Endothelial cell of umbilical vein (primary cell): ENCODE measurements at regions of chr14 and their contacts with region 1.

Region 1: DNA sequence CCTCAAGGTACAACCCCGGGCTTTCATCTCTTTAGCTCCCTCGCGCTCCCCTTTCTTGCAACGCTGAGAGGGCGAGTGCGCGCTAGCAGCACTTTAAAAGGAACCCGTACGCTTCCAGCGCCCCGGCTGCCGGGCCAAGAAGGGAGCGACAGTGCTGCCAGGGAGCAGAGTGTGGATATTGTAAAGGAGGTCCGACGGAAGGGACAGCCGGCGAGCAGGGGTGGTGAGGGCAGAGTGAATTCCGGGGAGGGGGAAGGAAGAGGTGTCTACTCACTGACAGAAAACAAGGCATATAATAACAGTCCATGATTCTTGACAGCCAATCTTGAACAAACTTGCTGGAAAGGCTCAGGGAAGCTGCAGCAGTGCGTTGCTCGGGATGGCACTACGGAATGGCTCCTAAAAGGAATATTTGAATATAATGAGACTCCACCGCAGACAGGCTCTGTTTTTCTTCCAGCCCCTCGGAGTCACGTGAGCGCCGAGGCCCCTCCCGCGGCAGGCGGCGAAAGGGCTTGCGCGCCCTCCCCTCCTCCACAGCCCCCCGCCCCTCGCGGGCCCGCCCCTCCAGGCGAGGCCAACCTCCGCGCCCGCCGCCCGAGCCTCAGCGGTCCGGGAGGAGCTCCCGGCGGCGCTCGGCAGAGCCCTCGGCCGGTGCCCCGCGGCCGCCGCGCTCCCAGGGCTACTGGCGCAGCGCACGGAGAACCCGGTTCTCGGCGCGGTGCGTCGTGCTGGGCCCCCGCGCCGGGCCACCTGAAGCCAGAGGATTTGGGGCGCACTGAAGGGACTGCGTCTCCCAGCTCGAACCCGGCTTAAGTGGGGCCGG is 3.4 kb downstream of the BMP4 start:
- DNase-seq: peak; percentile 94
- H3K4me3 ChIP-seq: peak overlapping the region; percentile 77 to 99 (median 86)
- H3K27ac ChIP-seq: peak overlapping the region; percentile 73
- H3K4me1 ChIP-seq: peaks cover 35% of the 10 kb centered on the region
- H3K27me3 ChIP-seq: no peaks in the 10 kb centered on the region
- CTCF ChIP-seq: no peak
- POLR2A ChIP-seq: peak; percentile 99

Region 2: GRCh38 chr14:53432378-53432802 is 520.8 kb before region 1 on chr14:
- CTCF ChIA-PET with region 1: no interaction called
- POLR2A ChIA-PET with region 1: no interaction called
- dilution Hi-C with region 1: no loop called
- intact Hi-C with region 1: loop called (anchors 1 kb)
- DNase-seq: peak; percentile 70
- H3K4me3 ChIP-seq: no peak overlapping the region
- H3K27ac ChIP-seq: no peak overlapping the region
- H3K4me1 ChIP-seq: no peaks in the 10 kb centered on the region
- H3K27me3 ChIP-seq: peaks cover 6 to 14% of the 10 kb centered on the region in 2 experiments
- CTCF ChIP-seq: peak; percentile 64 to 68
- POLR2A ChIP-seq: no peak

Region 3: GRCh38 chr14:53663709-53664108 is 289.5 kb before region 1 on chr14:
- CTCF ChIA-PET with region 1: interaction called, 35 read pairs
- POLR2A ChIA-PET with region 1: no interaction called
- dilution Hi-C with region 1: no loop called
- intact Hi-C with region 1: loop called (anchors 1 kb)
- DNase-seq: peak; percentile 51
- H3K4me3 ChIP-seq: no peak overlapping the region
- H3K27ac ChIP-seq: no peak overlapping the region
- H3K4me1 ChIP-seq: peaks cover 9% of the 10 kb centered on the region
- H3K27me3 ChIP-seq: no peaks in the 10 kb centered on the region
- CTCF ChIP-seq: peak; percentile 18 to 46
- POLR2A ChIP-seq: no peak

Region 4: GRCh38 chr14:53881161-53881871 is 71.9 kb before region 1 on chr14:
- CTCF ChIA-PET with region 1: interaction called, 7 read pairs
- POLR2A ChIA-PET with region 1: interaction called, 9 read pairs
- dilution Hi-C with region 1: no loop called
- intact Hi-C with region 1: loop called (anchors 1 kb)
- DNase-seq: peak; percentile 87
- H3K4me3 ChIP-seq: peak overlapping the region in 1 of 3 experiments; percentile 35
- H3K27ac ChIP-seq: peak overlapping the region; percentile 85
- H3K4me1 ChIP-seq: peaks cover 71% of the 10 kb centered on the region
- H3K27me3 ChIP-seq: no peaks in the 10 kb centered on the region
- CTCF ChIP-seq: no peak
- POLR2A ChIP-seq: peak; percentile 55

Region 5: DNA sequence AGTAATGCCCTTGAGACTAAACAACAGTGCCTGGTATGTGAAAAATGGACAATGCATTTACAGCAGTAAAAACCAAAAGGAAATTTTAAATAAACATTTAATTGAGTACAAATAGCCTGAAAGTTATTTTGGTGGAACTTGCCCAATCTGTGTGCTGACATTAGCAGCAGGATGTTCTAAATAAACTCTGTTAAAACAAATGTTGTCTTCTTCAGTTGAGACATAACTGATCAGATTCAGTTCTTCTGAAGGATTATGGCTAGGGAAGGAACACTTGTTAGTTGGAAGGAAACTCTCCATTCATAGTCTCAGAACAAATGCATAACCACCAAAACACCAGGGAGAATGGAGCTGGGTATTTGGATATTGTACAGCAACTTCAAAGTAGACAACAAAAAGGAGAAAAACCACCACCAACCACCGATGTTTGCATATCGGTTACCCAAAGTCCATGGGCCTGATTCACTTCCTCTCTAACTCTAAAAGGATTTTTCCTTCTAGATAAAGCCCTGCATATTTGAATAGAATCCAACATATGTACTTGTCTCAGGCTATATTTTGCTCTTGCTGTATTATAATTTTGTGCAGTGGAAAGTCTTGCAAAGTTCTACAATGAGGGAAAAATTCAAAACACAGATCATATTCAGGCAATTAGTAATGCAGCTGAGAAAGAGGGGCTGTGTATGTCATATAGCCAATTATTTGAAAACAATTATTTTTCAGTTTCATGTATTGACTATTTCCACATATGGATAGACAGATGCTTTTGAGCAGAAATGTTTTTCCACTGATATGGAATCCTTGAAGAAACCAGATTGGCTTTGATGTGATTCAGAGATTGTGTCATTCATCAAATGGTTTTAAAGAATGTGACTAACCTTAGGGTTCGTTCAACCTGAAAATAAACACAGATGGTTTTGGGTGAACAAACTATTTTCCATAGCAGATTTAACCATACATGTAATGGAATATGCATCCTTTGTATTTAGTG is 155.6 kb after region 1 on chr14:
- CTCF ChIA-PET with region 1: no interaction called
- POLR2A ChIA-PET with region 1: interaction called, 6 read pairs
- dilution Hi-C with region 1: no loop called
- intact Hi-C with region 1: loop called (anchors 1 kb)
- DNase-seq: peak; percentile 94
- H3K4me3 ChIP-seq: peak overlapping the region in 1 of 3 experiments; percentile 17
- H3K27ac ChIP-seq: peak overlapping the region; percentile 96
- H3K4me1 ChIP-seq: peaks cover 44% of the 10 kb centered on the region
- H3K27me3 ChIP-seq: no peaks in the 10 kb centered on the region
- CTCF ChIP-seq: no peak
- POLR2A ChIP-seq: no peak

Region 6: DNA sequence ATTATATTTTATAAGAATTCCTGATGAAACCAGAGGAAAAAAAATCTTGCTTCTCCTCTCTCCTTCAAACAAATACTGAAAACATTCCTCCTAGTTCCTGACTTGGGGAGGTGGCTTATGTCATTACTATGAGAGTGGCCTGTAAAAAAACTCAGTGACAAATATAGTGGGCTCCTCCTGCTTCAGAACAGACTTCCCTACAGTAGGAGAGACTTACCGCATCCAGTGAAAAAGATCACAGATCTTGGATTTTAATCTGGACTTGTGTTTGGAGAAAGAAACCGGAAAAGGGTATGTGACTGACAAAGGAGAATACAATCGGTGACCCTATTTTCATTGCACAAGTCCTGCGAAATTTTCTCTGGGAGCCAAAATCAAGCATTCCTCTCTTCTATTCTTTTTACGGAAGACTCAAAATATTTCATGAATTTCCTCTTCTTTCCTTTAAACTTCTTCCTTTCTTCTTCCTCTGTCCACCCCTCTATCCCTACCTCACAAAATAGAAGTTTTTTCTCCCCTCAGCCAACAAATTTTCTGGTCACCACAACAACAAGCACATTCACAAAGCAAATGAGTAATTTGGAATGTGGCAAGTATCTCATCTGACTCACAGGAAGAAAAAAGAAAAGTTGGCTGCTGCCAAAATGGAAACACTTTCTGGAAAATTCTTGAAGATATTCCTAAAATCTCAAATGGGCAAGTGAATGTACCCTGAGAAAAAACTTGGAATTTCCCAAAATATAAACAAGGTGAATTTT is 258.5 kb after region 1 on chr14:
- CTCF ChIA-PET with region 1: no interaction called
- POLR2A ChIA-PET with region 1: no interaction called
- dilution Hi-C with region 1: no loop called
- intact Hi-C with region 1: loop called (anchors 1 kb)
- DNase-seq: peak; percentile 86
- H3K4me3 ChIP-seq: no peak overlapping the region
- H3K27ac ChIP-seq: peak overlapping the region; percentile 91
- H3K4me1 ChIP-seq: peaks cover 25% of the 10 kb centered on the region
- H3K27me3 ChIP-seq: no peaks in the 10 kb centered on the region
- CTCF ChIP-seq: no peak
- POLR2A ChIP-seq: no peak

Region 7: DNA sequence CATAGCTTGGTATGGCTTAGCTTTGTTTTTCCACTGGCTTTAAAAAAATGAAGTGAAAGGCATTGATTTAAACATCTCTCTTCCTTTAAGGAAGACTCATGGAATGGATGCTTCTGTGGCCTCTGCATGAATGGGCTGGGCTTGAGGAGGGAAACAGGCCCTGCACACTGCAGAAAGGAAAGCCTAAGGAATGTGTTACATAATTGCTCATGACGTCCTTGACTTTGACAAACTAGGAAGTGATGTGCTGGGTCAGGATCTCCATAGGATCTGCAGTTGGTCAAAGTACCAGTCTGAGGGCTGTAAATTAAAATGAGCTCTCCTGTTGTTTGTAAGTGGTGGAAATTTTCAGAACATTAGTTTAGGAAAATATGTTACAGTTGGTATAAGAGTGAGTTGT is 626.4 kb after region 1 on chr14:
- CTCF ChIA-PET with region 1: no interaction called
- POLR2A ChIA-PET with region 1: no interaction called
- dilution Hi-C with region 1: no loop called
- intact Hi-C with region 1: no loop called
- DNase-seq: peak; percentile 50
- H3K4me3 ChIP-seq: no peak overlapping the region
- H3K27ac ChIP-seq: no peak overlapping the region
- H3K4me1 ChIP-seq: peaks cover 18% of the 10 kb centered on the region
- H3K27me3 ChIP-seq: no peaks in the 10 kb centered on the region
- CTCF ChIP-seq: no peak
- POLR2A ChIP-seq: no peak